Activated T-helper 2 cell treated with anti-CD3 and anti-CD28 coated beads, Interferon-gamma antibody, Interleukin-2, Interleukin-4, amounts not matched to agents 10 μg/mL and 5 μg/mL and 100 μg/mL, durations not matched to agents 14 hours and 24 hours and 36 hours (primary cell): ENCODE measurements at regions of chr16 and their contacts with region 1.

Region 1: DNA sequence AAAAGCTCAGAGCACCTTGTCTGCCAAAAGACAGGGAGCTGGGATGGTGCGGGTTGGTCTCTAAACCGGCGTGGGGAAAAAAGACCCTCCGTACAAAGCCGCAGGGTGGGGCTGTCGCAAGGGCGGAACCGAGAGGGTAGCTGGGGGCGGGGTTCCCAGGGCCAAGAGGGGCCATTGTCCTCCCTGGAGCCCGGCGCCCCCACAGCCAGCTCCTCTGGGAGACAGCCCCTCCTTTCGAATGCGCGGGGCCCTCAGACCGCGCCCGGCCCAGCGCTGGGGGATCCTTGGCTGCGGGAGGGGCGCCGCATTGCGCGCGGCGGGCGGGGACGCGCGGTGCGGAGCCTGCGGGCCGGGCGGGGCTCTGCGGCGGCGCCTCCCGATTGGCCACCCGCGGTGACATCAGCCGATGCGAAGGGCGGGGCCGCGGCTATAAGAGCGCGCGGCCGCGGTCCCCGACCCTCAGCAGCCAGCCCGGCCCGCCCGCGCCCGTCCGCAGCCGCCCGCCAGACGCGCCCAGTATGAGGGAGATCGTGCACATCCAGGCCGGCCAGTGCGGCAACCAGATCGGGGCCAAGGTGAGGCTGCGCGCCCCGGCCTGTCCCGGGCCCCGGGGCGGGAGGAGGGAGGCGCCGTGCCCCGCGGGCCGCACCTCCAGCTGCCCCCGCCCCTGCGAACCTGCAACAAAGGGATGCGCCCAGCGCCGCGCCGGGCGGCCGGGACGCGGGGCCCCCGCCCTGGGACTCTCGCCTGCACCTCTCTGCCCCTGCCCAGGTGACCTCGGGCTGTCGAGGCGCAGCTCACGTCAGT is at the start of gene TUBB3:
- DNase-seq: peak; percentile 64
- H3K4me3 Mint-ChIP-seq: peak within 1 kb of the TSS; percentile 71
- H3K27ac Mint-ChIP-seq: peak within 1 kb of the TSS; percentile 28
- H3K4me1 Mint-ChIP-seq: peaks cover 26% of the 10 kb centered on the region
- H3K27me3 Mint-ChIP-seq: peaks cover 26% of the 10 kb centered on the region
- total RNA-seq, gene TUBB3: 2.9 and 3.7 TPM in 2 replicates

Region 2: DNA sequence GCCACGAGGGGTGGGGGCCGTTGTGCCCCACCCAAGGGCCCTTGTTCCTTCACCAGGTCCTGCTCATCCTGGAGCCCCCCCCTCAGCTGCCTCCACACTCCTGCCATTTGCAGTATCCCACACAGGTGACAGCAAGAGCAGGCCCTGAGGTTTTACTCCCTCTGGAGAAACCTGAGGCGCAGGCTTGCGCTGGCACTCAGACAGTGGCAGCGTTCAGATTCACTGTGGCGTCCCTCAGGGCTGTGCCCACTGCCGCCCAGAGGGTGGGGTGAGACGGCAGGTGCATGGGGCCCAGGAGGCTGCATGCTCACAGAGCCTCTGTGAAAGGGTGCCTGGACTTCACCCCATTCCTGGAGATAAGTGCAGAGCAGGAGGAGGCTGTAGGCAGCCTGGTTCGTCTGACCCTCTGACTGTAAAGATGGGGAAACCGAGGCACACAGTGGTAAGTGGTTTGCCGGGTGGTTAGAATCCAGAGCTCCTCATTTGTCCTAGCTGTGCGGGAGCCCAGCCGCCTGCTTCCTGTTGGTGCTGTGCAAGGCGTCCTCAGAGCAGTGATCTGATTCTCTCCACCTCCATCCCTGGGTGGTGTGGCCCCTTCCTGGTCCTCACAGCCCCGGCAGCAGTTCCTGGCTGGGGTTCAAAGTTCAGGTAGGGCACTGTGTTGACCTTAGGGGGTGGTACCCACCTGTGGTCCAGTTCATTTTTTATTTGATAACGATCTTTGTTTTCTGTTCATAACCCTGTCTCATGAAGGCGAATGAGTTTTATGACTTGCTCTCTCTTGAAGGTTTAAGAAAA is 93.2 kb before region 1 on chr16:
- intact Hi-C with region 1: loop called (anchors 10 kb)
- DNase-seq: no peak
- H3K4me3 Mint-ChIP-seq: no peak overlapping the region
- H3K27ac Mint-ChIP-seq: no peak overlapping the region
- H3K4me1 Mint-ChIP-seq: peaks cover 2% of the 10 kb centered on the region
- H3K27me3 Mint-ChIP-seq: peaks cover 15% of the 10 kb centered on the region

Region 3: DNA sequence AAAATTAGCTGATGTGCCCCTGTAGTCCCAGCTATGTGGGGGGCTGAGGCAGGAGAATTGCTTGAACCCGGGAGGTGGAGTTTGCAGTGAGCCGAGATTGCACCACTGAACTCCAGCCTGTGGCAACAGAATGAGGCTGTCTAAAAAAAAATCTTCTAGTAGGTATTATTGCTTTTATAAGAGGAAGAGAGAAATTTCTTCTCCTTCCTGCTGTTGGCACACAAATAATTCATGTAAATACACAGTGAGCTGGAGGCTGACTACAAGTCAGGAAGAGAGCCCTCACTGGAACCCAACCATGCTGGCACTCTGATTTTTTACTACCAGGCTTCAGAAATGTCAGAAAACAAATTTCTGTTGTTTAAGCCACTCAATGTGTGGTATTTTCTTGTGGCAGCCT is 147.4 kb after region 1 on chr16:
- intact Hi-C with region 1: no loop called
- DNase-seq: no peak
- H3K4me3 Mint-ChIP-seq: no peak overlapping the region
- H3K27ac Mint-ChIP-seq: no peak overlapping the region
- H3K4me1 Mint-ChIP-seq: no peaks in the 10 kb centered on the region
- H3K27me3 Mint-ChIP-seq: peaks cover 12% of the 10 kb centered on the region